OCI-LY7 (cell line): ENCODE measurements at regions of chr10 and their contacts with region 1.

Region 1: GRCh38 chr10:119375574-119376272 is 166.8 kb downstream of the RGS10 start:
- DNase-seq: no peak
- H3K4me3 ChIP-seq: no peak overlapping the region
- H3K27ac ChIP-seq: no peak overlapping the region
- H3K4me1 ChIP-seq: peaks cover 6% of the 10 kb centered on the region
- CTCF ChIP-seq: no peak

Region 2: GRCh38 chr10:119502209-119502608 is 126.5 kb after region 1 on chr10:
- CTCF ChIA-PET with region 1: interaction called, 10 read pairs
- POLR2A ChIA-PET with region 1: no interaction called
- intact Hi-C with region 1: no loop called
- DNase-seq: peak; percentile 88
- H3K4me3 ChIP-seq: peak overlapping the region; percentile 28
- H3K27ac ChIP-seq: peak overlapping the region; percentile 54
- H3K4me1 ChIP-seq: peaks cover 33% of the 10 kb centered on the region
- CTCF ChIP-seq: no peak